Posterior cingulate gyrus (tissue), 11 donors: ENCODE measurements at regions of chr3 and their contacts with region 1.

Region 1: GRCh38 chr3:126267226-126267975 is 87.0 kb upstream of the ALDH1L1 start:
- DNase-seq: peak; percentile 54 to 95 (median 73)

Region 2: DNA sequence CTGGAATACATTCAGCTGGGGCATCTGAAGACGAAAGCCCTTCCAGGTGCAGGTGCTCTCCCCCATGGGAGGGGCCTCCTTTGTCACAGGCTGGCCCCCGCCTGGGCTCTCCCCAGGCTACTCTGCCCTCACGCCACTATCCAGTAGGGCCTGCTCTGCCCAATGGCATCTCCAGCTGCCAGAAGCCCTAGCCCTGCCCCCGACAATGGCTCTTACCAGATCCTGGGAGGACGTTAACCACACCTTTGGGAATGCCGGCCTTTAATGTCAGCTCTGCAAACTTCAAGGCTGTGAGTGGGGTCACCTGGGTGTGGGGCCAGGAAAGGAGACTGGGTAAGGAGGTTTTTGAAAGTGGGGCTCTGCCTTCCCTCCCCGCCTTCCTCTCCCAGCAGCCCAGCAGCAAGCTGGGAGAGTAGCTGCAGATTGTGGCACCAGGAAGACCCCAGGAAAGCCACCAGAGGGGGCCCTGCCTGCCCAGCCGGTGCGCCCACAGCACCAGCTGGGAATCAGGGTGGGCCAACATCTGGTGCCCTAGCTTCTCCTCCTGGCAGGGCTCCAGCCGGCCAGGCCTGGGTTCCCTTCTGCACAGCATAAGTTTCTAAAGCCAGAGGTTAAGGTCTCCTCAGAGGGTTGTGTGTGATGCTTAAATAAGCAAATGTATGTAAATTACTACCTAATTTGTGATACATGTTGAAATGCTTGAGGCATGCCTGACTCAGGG is 143.1 kb before region 1 on chr3:
- intact Hi-C with region 1: no loop called
- DNase-seq: peak in 7 of 10 donors; percentile 2 to 59 (median 25)

Region 3: DNA sequence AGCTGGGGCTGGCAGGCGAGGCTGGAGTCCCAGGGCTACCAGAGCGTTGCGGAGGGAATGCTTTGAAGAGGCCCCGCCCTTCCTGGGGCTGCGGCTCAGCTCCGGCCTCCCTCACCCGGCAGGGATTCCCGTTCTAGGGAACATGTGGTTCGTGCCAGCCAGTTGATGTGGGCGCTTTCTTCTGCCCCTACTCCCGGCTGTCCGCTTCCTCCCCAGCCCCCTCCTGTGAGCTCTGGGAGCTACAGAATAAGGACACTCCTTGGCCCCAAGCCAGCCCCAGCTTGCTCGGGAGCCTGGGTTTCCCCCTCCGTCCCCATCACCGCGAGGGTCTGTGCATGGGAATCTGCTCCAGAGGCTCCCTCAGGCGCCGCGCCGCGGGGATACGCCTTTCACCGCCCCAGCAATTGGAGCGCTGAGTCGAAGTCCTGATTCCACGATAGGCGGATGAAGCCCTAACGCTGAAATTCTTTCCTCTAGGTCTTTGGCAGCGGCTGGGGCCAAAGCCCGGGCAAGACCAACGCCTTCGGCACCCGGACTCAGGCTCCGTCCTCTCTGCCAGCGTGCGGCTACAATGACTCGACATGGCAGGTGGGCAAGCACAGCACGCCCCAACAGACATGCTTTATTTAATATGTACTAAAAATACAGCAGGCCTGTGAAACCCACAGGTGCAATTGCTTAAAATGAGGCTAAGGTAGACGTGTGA is 20.3 kb after region 1 on chr3:
- intact Hi-C with region 1: loop called (anchors 2 kb)
- DNase-seq: peak; percentile 57 to 97 (median 83)

Region 4: DNA sequence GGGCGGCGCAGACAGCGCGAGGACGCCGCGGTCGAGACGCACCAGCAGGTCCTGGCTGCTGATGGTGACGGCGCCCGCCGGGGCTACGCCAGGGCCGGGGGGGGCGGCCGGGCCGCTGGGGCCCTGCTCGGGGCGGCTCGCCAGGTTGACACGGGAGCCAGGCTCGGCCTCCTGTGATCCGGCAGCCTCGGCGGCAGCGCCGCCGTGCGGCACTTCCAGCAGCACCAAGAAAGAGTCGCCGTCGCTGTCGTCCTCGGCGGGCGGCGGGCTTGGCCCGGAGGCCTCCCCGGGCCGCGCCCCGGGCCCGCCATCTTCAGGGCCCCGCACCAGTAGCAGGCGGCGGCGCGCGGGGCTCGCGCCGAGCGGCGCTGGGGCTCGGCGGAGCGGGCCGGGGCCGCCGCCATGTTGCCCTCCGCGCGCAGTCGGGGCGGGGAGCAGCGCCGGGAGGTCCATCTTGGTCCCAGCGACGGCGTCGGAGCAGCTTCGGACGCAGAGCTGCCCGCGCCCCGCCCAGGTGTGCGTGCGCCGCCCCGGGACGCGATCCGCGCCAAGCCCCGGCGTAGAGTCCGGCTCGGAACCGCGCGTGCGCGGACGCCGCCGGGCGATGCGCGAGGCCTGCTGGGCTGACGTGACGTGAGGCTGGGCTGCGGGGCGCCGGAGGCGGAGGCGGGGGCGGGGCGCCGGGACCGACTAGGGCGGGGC is 208.2 kb after region 1 on chr3 and contains the start of gene ZXDC:
- intact Hi-C with region 1: loop called (anchors 10 kb)
- DNase-seq: peak; percentile 86 to 99 (median 92)

Region 5: DNA sequence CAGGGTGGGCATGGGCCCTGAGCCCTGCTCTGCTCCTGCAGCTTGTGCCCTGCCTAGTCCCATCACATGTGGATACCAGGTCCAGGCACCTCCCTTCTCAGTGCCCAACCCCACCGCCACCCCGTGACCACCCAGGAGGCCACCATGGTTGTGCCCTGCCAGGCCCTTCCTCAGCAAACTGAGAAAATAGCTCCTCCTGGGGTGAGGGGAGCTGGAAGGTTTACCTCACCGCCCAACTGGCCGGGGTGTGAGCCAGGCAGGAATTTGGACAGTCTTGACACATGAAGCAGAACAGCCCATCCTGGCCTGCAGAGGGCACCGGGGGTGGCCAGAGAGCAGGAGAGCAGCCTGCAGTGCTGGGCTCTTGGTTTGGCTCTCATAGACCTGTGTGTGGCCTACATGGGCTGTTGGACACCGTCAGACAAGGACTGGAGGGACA is 302.7 kb after region 1 on chr3:
- intact Hi-C with region 1: no loop called
- DNase-seq: no peak

Region 6: DNA sequence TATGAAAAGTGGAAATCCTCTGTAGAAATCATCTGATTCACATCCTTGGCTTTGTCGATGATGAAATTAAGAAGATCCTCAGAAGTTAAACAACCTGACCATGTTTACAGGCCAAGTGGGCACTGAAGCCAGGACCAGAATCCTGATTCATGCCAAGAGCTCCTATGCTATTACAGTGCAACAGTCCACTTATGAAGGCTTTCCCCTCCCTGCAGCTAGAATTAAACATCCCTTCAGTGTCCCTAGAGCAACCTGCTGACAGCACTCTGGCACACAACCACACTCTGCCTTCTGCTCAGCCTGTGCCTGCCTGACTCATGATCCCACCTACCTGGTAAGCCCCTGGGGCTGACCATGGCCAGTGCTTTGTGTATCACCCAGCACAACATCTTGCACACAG is 353.8 kb after region 1 on chr3:
- intact Hi-C with region 1: no loop called
- DNase-seq: no peak